Endothelial cell of umbilical vein (primary cell): ENCODE measurements at regions of chr3 and their contacts with region 1.

Region 1: GRCh38 chr3:43389388-43390254 is 103.3 kb downstream of the SNRK start:
- DNase-seq: peak; percentile 97
- H3K4me3 ChIP-seq: no peak overlapping the region
- H3K27ac ChIP-seq: peak overlapping the region; percentile 97
- H3K4me1 ChIP-seq: peaks cover 68% of the 10 kb centered on the region
- H3K27me3 ChIP-seq: no peaks in the 10 kb centered on the region
- CTCF ChIP-seq: no peak
- POLR2A ChIP-seq: peak; percentile 90

Region 2: GRCh38 chr3:43190666-43191065 is 199.0 kb before region 1 on chr3:
- CTCF ChIA-PET with region 1: no interaction called
- POLR2A ChIA-PET with region 1: interaction called, 5 read pairs
- dilution Hi-C with region 1: loop called (anchors 25 kb)
- intact Hi-C with region 1: loop called (anchors 1 kb)
- DNase-seq: peak; percentile 52
- H3K4me3 ChIP-seq: no peak overlapping the region
- H3K27ac ChIP-seq: peak overlapping the region; percentile 90
- H3K4me1 ChIP-seq: peaks cover 67% of the 10 kb centered on the region
- H3K27me3 ChIP-seq: no peaks in the 10 kb centered on the region
- CTCF ChIP-seq: no peak
- POLR2A ChIP-seq: no peak

Region 3: GRCh38 chr3:43236008-43236407 is 153.6 kb before region 1 on chr3:
- CTCF ChIA-PET with region 1: no interaction called
- POLR2A ChIA-PET with region 1: no interaction called
- dilution Hi-C with region 1: no loop called
- intact Hi-C with region 1: no loop called
- DNase-seq: no peak
- H3K4me3 ChIP-seq: no peak overlapping the region
- H3K27ac ChIP-seq: no peak overlapping the region
- H3K4me1 ChIP-seq: peaks cover 5% of the 10 kb centered on the region
- H3K27me3 ChIP-seq: no peaks in the 10 kb centered on the region
- CTCF ChIP-seq: no peak
- POLR2A ChIP-seq: no peak

Region 4: DNA sequence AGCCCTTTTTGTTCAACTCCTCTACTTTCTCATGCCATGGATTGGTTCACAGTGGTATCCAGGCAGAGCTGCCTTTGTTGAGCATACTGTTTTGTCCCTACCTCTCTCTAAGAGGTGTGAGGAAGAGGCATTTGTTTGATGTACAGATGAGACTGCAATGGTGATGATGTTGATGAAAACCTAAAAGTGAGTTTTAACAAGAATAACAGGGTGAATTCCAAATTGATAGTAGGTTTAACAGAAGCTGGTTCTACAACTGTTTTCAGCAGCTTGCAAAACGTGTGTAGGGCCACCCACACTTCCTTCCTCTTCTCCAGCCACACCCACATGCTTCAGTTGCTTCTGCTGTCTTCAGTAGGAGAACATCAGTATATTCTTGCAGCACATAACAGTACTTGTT is 93.1 kb before region 1 on chr3:
- CTCF ChIA-PET with region 1: no interaction called
- POLR2A ChIA-PET with region 1: no interaction called
- dilution Hi-C with region 1: no loop called
- intact Hi-C with region 1: no loop called
- DNase-seq: peak; percentile 24
- H3K4me3 ChIP-seq: no peak overlapping the region
- H3K27ac ChIP-seq: no peak overlapping the region
- H3K4me1 ChIP-seq: peaks cover 59% of the 10 kb centered on the region
- H3K27me3 ChIP-seq: no peaks in the 10 kb centered on the region
- CTCF ChIP-seq: no peak
- POLR2A ChIP-seq: no peak

Region 5: DNA sequence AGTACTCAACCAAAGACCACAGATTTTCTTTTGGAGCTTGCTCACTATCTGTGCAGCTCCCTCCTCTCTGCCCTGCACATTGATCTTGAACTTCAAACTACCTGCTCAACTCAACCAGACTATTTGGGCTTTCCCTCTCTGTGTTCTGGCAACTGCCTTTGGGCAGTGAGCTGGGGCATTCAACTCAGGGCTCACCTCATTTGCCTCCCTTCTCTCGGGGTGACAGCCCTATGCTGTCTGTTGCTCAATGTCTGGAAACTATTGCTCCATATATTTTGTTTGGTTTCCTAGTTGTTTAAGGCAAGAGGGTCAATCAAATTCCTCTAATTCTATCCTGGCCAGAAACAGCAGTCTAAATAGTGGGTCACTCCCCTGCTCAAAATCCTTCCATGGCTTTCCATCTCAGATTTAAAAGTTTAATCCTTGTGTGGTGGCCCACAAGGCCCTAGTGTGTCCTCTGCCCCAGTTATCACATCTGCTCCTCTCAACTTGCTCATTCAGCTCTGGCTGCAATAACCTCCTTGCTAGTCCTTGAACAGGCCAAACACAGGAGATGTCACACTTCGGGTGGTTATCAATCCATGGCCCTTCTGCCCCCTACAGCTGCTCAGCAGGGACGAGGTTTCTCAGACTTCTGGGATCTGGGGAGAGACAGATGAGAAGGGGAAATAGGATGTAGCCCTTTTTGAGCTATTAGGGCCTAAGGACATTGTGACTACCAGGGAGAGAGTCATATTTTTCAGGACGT is 35.5 kb before region 1 on chr3:
- CTCF ChIA-PET with region 1: interaction called, 5 read pairs
- POLR2A ChIA-PET with region 1: no interaction called
- dilution Hi-C with region 1: no loop called
- intact Hi-C with region 1: loop called (anchors 2 kb)
- DNase-seq: peak; percentile 32
- H3K4me3 ChIP-seq: no peak overlapping the region
- H3K27ac ChIP-seq: no peak overlapping the region
- H3K4me1 ChIP-seq: no peaks in the 10 kb centered on the region
- H3K27me3 ChIP-seq: no peaks in the 10 kb centered on the region
- CTCF ChIP-seq: no peak
- POLR2A ChIP-seq: no peak

Region 6: GRCh38 chr3:43418601-43419272 is 29.1 kb after region 1 on chr3:
- CTCF ChIA-PET with region 1: interaction called, 5 read pairs
- POLR2A ChIA-PET with region 1: interaction called, 3 read pairs
- dilution Hi-C with region 1: no loop called
- intact Hi-C with region 1: loop called (anchors 1 kb)
- DNase-seq: peak; percentile 88
- H3K4me3 ChIP-seq: no peak overlapping the region
- H3K27ac ChIP-seq: peak overlapping the region; percentile 77
- H3K4me1 ChIP-seq: peaks cover 26% of the 10 kb centered on the region
- H3K27me3 ChIP-seq: no peaks in the 10 kb centered on the region
- CTCF ChIP-seq: no peak
- POLR2A ChIP-seq: no peak

Region 7: GRCh38 chr3:43432462-43432861 is 42.8 kb after region 1 on chr3:
- CTCF ChIA-PET with region 1: no interaction called
- POLR2A ChIA-PET with region 1: no interaction called
- dilution Hi-C with region 1: no loop called
- intact Hi-C with region 1: no loop called
- DNase-seq: no peak
- H3K4me3 ChIP-seq: no peak overlapping the region
- H3K27ac ChIP-seq: no peak overlapping the region
- H3K4me1 ChIP-seq: no peaks in the 10 kb centered on the region
- H3K27me3 ChIP-seq: no peaks in the 10 kb centered on the region
- CTCF ChIP-seq: no peak
- POLR2A ChIP-seq: no peak

Region 8: DNA sequence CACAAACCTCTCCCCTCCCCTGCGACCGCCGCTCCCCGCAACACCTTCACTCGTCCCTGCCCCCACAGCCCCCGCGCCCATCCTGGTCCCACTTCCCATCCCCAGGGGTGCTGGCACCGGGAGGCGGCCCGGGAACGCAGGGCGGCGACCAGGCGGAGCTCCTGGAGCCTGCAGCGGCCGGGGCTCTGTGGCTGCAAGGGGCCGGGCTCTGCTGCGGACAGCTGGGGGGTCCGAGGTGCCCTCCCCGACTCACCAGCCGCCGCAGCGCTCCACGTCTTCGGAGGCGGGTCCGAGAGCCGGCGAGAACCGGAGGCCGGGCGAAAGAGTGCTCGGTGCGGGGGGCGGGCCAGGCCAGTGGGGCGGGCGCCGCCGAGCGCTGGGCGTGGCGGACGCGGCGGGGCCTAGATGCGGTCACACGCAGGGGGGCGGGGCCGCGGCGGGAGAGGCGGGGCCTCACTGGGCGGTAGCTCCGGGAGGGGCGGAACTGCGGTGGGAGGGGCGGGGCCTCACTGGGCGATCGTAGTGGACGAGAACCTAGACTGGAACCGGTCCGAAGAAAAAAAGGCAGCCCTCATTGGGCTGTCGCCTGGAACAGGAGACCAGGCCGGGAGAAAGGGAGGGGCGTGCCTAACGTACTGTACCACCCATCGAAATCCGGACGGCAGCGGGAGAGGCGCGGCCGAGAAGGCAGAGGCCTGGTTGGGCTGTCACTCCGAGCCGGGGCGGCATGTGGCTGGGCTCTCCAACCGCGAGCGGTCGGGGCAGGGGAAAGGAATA is 232.2 kb after region 1 on chr3 and contains the start of gene ANO10:
- CTCF ChIA-PET with region 1: no interaction called
- POLR2A ChIA-PET with region 1: no interaction called
- dilution Hi-C with region 1: no loop called
- intact Hi-C with region 1: loop called (anchors 10 kb)
- DNase-seq: peak; percentile 99
- H3K4me3 ChIP-seq: peak within 1 kb of the TSS; percentile 75 to 83 (median 81)
- H3K27ac ChIP-seq: peak within 1 kb of the TSS; percentile 63
- H3K4me1 ChIP-seq: peaks cover 10% of the 10 kb centered on the region
- H3K27me3 ChIP-seq: no peaks in the 10 kb centered on the region
- CTCF ChIP-seq: no peak
- POLR2A ChIP-seq: peak; percentile 69
- total RNA-seq, gene ANO10: 40.9 and 45.8 TPM in 2 replicates

Region 9: GRCh38 chr3:44235604-44236484 is 846.2 kb after region 1 on chr3:
- CTCF ChIA-PET with region 1: no interaction called
- POLR2A ChIA-PET with region 1: no interaction called
- dilution Hi-C with region 1: no loop called
- intact Hi-C with region 1: no loop called
- DNase-seq: peak; percentile 96
- H3K4me3 ChIP-seq: no peak overlapping the region
- H3K27ac ChIP-seq: peak overlapping the region; percentile 57
- H3K4me1 ChIP-seq: peaks cover 12% of the 10 kb centered on the region
- H3K27me3 ChIP-seq: no peaks in the 10 kb centered on the region
- CTCF ChIP-seq: peak; percentile 59 to 86
- POLR2A ChIP-seq: no peak